Aorta (tissue), 5 donors: ENCODE measurements at regions of chr2 and their contacts with region 1.

Region 1: DNA sequence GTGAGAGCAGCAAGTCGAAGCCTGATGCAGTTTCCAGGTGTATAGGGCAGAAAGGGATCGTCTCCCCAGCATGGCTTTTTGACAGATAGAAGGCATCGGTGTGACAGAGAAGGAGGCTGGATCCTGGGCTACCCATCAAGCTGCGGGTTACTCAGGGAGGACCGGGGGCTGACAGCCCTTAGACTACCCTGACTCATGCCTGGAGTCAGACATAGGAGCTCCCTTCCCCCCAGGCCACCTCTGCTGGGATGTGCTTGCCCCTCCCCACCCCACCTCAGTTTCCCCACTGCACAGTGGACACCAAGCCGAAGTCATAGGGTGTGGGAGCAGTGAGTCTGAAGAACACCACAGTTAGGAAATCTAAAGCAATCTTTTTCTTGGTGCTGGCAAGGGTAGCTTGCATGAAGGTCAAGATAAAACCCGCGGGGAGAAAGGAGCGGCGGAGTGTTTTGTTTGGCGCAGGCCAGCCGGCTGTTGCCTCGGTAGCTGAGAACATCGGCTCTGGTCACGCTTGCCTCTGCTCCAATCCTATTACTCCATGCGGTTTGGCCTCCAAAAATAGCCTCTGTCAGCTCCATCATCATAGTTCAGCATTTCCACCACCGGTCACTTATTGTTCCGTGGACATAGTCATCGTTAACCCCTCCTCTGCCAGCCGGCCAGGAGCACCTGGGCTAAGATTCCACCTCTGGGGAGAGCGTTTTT is 169.2 kb upstream of the GLI2 start:
- DNase-seq: peak; percentile 92 to 94
- ATAC-seq: peak; percentile 90
- H3K4me3 ChIP-seq: no peak overlapping the region
- H3K27ac ChIP-seq: no peak overlapping the region
- H3K4me1 ChIP-seq: no peaks in the 10 kb centered on the region
- H3K27me3 ChIP-seq: no peaks in the 10 kb centered on the region

Region 2: DNA sequence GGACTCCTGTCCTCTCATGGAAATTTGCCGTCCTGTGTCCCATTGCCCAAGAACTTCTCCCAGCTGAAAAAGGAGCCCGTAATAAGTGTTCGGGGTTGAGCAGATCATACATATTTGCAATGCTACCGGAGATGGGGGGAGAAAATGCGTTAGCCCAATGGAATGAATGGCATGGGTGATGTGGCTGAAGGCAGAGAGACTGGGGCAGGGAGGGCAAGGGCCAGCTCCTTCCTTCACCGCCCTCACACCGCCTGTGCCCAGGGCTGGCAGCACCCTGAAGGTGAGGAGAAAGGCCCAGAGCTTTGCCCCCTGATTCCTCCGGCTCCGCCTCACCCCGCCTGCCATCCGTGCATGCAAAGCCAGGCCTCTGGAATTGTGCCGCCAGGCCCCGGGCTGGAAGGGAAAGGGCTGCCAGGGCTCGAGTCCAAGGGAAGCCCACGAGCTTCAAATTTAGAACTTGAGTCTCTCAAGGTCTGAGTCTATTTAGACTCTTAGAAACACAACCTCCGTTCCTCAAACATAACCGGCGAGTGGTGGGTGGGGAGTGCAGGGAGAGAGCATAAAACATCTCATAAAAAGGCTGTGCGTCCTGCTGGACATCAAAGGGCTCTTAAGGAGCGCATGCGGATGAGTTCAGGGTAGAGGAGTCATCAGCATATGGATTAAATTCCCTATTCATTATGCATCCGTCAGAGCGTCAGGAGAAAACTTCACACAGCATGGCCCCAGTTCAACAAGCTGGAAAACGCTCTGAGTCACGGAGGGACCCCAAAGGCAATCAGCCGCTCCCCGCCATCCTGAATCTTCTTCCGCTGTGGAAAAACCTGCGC is 47.5 kb after region 1 on chr2:
- intact Hi-C with region 1: loop called in 1 of 2 experiments (anchors 5 kb)
- DNase-seq: peak; percentile 74 to 87
- ATAC-seq: peak; percentile 45
- H3K4me3 ChIP-seq: no peak overlapping the region
- H3K27ac ChIP-seq: peak overlapping the region in 1 of 2 donors; percentile 82
- H3K4me1 ChIP-seq: no peaks in the 10 kb centered on the region
- H3K27me3 ChIP-seq: no peaks in the 10 kb centered on the region